Esophagus squamous epithelium (tissue), 5 donors: ENCODE measurements at regions of chr6 and their contacts with region 1.

Region 1: GRCh38 chr6:56708810-56709597 is 66.3 kb upstream of the DST start:
- DNase-seq: no peak
- H3K4me3 ChIP-seq: no peak overlapping the region
- H3K27ac ChIP-seq: peak overlapping the region in 2 of 4 donors; percentile 14 to 48
- H3K4me1 ChIP-seq: peaks cover 0 to 22% (median 13%) of the 10 kb centered on the region in 3 donors
- H3K27me3 ChIP-seq: no peaks in the 10 kb centered on the region
- CTCF ChIP-seq: peak in 5 of 6 experiments; percentile 39 to 67 (median 62)
- POLR2A ChIP-seq: no peak

Region 2: DNA sequence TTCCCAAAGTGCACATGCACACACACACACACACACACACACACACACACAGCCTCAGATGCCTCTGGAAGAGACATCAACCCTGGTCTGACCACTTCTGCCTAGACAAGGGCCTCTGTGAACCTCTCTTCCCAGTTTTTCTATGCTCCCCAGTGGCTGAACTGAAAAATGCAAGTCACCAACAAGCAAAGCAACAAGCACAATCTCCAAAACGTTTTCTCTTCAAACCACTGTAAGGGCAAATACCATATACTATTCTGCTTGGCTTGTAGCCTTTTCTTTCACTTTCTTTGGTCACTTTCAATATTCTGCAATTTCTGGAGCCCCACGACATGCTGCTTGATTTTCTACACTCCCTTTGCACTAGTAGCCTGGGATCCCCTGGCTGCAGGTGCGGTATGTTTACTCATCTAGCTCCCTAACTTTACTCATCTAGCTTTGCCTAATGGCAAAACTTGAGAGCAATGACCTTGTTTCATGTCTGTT is 55.1 kb after region 1 on chr6:
- intact Hi-C with region 1: loop called (anchors 10 kb)
- DNase-seq: no peak
- H3K4me3 ChIP-seq: no peak overlapping the region
- H3K27ac ChIP-seq: no peak overlapping the region
- H3K4me1 ChIP-seq: peaks cover 0 to 17% (median 4%) of the 10 kb centered on the region in 3 donors
- H3K27me3 ChIP-seq: no peaks in the 10 kb centered on the region
- CTCF ChIP-seq: peak in 2 of 6 experiments; percentile 30 to 53
- POLR2A ChIP-seq: no peak

Region 3: GRCh38 chr6:56843573-56844349 is 134.8 kb after region 1 on chr6:
- intact Hi-C with region 1: loop called (anchors 10 kb)
- DNase-seq: no peak
- H3K4me3 ChIP-seq: peak overlapping the region; percentile 41 to 82 (median 64)
- H3K27ac ChIP-seq: peak overlapping the region; percentile 65 to 93 (median 84)
- H3K4me1 ChIP-seq: peaks cover 8 to 43% (median 8%) of the 10 kb centered on the region in 3 donors
- H3K27me3 ChIP-seq: peaks cover 0 to 36% (median 0%) of the 10 kb centered on the region in 4 donors
- CTCF ChIP-seq: peak in 4 of 6 experiments; percentile 25 to 44 (median 38)
- POLR2A ChIP-seq: peak in 2 of 4 donors; percentile 29 to 37